IMR-90 (cell line): ENCODE measurements at regions of chr10 and their contacts with region 1.

Region 1: GRCh38 chr10:4174197-4174596 is 389.2 kb upstream of the KLF6 start:
- DNase-seq: no peak
- ATAC-seq: no peak
- H3K4me3 ChIP-seq: no peak overlapping the region
- H3K27ac ChIP-seq: no peak overlapping the region
- H3K4me1 ChIP-seq: no peaks in the 10 kb centered on the region
- H3K27me3 ChIP-seq: no peaks in the 10 kb centered on the region
- CTCF ChIP-seq: no peak
- POLR2A ChIP-seq: no peak
- RAD21 ChIP-seq: no peak

Region 2: GRCh38 chr10:3848775-3849635 is 325.2 kb before region 1 on chr10:
- CTCF ChIA-PET with region 1: no interaction called
- POLR2A ChIA-PET with region 1: no interaction called
- dilution Hi-C with region 1: no loop called
- in situ Hi-C with region 1: no loop called
- intact Hi-C with region 1: no loop called
- DNase-seq: peak; percentile 86
- ATAC-seq: no peak
- H3K4me3 ChIP-seq: no peak overlapping the region
- H3K27ac ChIP-seq: no peak overlapping the region
- H3K4me1 ChIP-seq: peaks cover 17% of the 10 kb centered on the region
- H3K27me3 ChIP-seq: no peaks in the 10 kb centered on the region
- CTCF ChIP-seq: no peak
- POLR2A ChIP-seq: no peak
- RAD21 ChIP-seq: no peak

Region 3: DNA sequence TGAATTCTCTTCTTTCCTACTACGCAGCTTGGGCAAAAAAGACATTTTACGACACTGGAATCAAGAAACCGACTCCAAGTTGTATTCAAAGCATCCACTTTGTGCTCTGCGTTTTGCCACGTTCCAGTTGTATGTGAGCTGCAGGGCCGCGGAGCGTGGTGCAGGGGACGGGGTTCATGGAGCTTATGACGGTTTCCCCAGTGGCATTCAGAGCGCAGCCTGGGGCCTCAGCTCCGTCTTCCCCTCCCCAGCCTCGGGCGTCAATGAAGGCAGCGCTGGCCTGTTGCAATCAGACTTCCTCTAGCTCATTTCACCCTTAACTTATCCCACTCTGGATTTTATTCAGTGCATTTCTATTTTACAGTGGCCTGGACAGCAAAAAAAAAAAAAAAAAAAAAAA is 14.2 kb after region 1 on chr10:
- CTCF ChIA-PET with region 1: no interaction called
- POLR2A ChIA-PET with region 1: interaction called, 19 read pairs
- dilution Hi-C with region 1: no loop called
- in situ Hi-C with region 1: no loop called
- intact Hi-C with region 1: no loop called
- DNase-seq: no peak
- ATAC-seq: no peak
- H3K4me3 ChIP-seq: no peak overlapping the region
- H3K27ac ChIP-seq: no peak overlapping the region
- H3K4me1 ChIP-seq: peaks cover 2% of the 10 kb centered on the region; the same call in 1 of the 2 replicates
- H3K27me3 ChIP-seq: peaks cover 2% of the 10 kb centered on the region; the same call in 1 of the 2 replicates
- CTCF ChIP-seq: no peak
- POLR2A ChIP-seq: no peak
- RAD21 ChIP-seq: no peak